Colonic mucosa (tissue), 4 donors: ENCODE measurements at regions of chr4 and their contacts with region 1.

Region 1: DNA sequence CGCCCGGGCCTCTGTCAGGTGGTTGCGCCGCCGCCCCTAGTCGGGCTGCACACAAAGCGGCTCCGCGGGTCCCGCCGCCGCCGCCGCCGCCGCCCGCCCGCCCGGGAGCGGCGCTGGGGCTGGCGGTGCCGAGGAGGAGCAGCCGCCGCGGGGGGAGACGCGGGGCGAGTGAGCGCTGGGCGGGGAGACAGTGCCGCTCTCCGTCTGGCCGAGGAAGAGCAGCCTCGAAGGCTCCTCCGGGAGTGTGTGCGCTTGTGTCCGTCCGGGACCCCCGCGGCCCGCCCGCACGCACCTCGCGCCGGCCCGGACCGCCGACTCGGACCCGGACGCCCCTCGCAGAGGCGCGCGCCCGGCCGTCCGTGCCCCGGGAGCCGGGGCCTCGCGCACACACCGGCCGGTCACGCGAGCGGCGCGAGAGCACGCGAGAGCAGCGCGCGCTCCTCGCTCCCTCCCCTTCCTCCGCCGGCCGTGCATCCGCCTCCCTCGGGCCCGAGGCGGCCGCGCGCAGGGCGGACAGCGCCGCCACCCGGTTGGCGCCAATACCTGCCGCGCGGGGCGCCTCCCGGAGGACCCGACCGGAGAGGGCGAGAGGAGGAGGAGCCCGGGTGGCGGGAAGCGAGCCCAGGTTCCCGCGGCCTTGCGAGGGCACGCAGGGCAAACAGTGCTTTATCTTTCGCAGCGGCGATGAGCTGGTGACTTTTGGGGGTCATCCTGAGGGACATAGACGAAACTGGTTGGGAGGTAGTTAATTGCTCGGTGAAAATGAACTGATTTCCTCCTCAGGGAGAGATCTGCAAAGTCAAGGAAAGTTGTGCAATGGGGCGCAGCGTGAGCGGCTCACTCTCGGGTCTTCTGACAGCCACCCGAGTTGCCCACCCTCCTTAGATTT is at the start of gene PDS5A:
- DNase-seq: peak; percentile 87
- H3K4me3 ChIP-seq: peak within 1 kb of the TSS; percentile 95
- H3K27ac ChIP-seq: peak within 1 kb of the TSS; percentile 92
- H3K4me1 ChIP-seq: peaks cover 4% of the 10 kb centered on the region
- H3K27me3 ChIP-seq: no peaks in the 10 kb centered on the region
- CTCF ChIP-seq: peak; percentile 73
- total RNA-seq, gene PDS5A: 63.8 to 68.0 TPM

Region 2: GRCh38 chr4:39469429-39470077 is 508.2 kb before region 1 on chr4:
- intact Hi-C with region 1: loop called (anchors 5 kb)
- DNase-seq: peak; percentile 46
- H3K4me3 ChIP-seq: no peak overlapping the region
- H3K27ac ChIP-seq: no peak overlapping the region
- H3K4me1 ChIP-seq: no peaks in the 10 kb centered on the region
- H3K27me3 ChIP-seq: no peaks in the 10 kb centered on the region
- CTCF ChIP-seq: peak; percentile 69

Region 3: DNA sequence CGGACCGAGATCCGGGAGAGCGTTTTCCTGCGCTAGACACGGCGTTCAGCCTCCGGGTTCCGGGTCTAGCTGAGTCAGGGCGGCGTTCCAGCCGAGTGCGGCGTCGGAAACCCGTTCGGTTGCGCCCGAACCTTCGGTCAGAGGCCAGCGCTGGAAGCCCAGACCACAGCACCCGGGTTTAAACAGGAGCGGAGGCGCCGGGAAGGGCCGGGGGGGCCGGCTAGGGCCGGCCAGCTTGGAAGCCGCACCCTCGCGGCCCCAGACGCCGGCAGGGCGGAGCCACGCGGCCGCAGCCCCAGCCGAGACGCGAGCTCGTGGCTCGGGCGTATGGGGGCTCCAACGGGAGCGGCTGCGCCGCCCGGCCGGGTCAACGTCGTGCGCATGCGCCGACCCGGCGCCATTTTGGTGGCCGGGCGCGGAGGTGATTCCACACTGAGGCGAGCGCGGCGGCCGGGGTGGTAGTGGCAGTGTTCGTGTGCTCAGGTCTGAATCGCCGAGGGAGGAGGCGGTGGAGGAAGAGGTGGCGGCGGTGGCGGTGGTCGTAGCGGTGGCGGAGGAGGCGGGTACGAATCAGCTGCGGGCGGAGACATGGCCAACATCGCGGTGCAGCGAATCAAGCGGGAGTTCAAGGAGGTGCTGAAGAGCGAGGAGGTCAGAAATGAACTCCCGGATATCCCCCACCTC is 279.9 kb before region 1 on chr4 and contains the start of gene UBE2K:
- intact Hi-C with region 1: loop called (anchors 2 kb)
- DNase-seq: peak; percentile 87
- H3K4me3 ChIP-seq: peak within 1 kb of the TSS; percentile 72
- H3K27ac ChIP-seq: peak within 1 kb of the TSS; percentile 86
- H3K4me1 ChIP-seq: peaks cover 4% of the 10 kb centered on the region
- H3K27me3 ChIP-seq: no peaks in the 10 kb centered on the region
- CTCF ChIP-seq: no peak
- total RNA-seq, gene UBE2K: 99.0 to 99.6 TPM

Region 4: DNA sequence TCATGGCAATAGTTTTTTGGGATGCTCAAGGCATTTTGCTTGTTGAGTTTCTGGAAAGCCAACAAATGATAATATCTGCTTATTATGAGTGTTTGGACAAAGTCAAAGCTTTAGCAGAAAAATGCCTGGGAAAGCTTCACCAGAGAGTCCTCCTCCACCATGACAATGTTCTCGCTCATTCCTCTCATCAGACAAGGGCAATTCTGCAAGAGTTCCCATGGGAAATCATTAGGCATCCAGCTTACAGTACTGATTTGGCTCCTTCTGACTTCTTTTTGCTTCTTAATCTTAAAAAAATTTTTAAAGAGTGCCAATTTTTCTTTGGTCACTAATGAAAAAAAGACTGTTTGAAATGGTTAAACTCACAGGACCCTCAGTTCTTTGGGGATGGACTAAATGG is 143.5 kb before region 1 on chr4:
- intact Hi-C with region 1: no loop called
- DNase-seq: no peak
- H3K4me3 ChIP-seq: no peak overlapping the region
- H3K27ac ChIP-seq: no peak overlapping the region
- H3K4me1 ChIP-seq: no peaks in the 10 kb centered on the region
- H3K27me3 ChIP-seq: no peaks in the 10 kb centered on the region
- CTCF ChIP-seq: no peak